Activated naive CD4-positive, alpha-beta T cell treated with anti-CD3 and anti-CD28 coated beads, Interleukin-2, amount 10 ng/mL, durations not matched to agents 7 days and 5 days (primary cell): ENCODE measurements at regions of chr10 and their contacts with region 1.

Region 1: DNA sequence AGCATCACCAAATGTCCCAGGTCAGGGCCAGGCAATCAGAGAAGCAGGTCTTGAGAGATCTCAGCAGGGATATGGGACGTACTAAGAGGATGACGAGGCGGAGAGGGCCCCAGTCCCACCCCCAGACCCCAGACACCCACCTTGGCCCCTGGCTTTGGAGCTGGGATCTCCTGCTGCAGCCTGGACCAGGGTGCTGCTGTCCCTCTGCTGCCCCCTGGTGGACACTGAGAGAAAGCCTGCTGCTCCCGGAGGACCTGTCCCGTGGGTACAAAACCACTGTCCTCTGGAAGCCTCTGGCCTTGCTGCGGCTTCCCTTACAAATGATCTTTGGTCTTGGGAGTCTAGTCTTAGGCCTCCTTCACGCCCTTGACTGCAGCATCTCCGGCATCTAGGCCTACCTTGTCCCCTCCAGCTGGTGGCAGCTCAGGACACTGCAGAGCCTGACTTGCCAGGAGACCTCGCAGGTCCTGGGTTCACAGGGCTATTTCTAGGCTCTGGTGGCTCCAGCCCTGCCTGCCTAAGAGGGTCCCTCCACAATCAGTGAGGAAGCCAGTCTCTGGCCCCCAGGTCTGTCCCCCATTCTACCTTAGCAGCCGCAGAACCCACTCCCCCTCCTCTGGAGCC is 97.1 kb downstream of the RGS10 start:
- DNase-seq: peak; percentile 89
- H3K4me3 Mint-ChIP-seq: no peak overlapping the region
- H3K27ac Mint-ChIP-seq: peak overlapping the region; percentile 43
- H3K4me1 Mint-ChIP-seq: peaks cover 14% of the 10 kb centered on the region
- H3K27me3 Mint-ChIP-seq: no peaks in the 10 kb centered on the region

Region 2: GRCh38 chr10:119416855-119417254 is 28.6 kb before region 1 on chr10:
- CTCF ChIA-PET with region 1: interaction called, 13 read pairs
- DNase-seq: peak; percentile 82
- H3K4me3 Mint-ChIP-seq: no peak overlapping the region
- H3K27ac Mint-ChIP-seq: no peak overlapping the region
- H3K4me1 Mint-ChIP-seq: no peaks in the 10 kb centered on the region
- H3K27me3 Mint-ChIP-seq: no peaks in the 10 kb centered on the region

Region 3: GRCh38 chr10:119457966-119458766 is 12.7 kb after region 1 on chr10:
- CTCF ChIA-PET with region 1: interaction called, 12 read pairs
- DNase-seq: no peak
- H3K4me3 Mint-ChIP-seq: no peak overlapping the region
- H3K27ac Mint-ChIP-seq: no peak overlapping the region
- H3K4me1 Mint-ChIP-seq: peaks cover 2% of the 10 kb centered on the region
- H3K27me3 Mint-ChIP-seq: peaks cover under 1% of the 10 kb centered on the region

Region 4: GRCh38 chr10:119489991-119490326 is 44.5 kb after region 1 on chr10:
- CTCF ChIA-PET with region 1: interaction called, 17 read pairs
- DNase-seq: no peak
- H3K4me3 Mint-ChIP-seq: peak overlapping the region; percentile 74
- H3K27ac Mint-ChIP-seq: peak overlapping the region; percentile 89
- H3K4me1 Mint-ChIP-seq: peaks cover 59% of the 10 kb centered on the region
- H3K27me3 Mint-ChIP-seq: no peaks in the 10 kb centered on the region

Region 5: DNA sequence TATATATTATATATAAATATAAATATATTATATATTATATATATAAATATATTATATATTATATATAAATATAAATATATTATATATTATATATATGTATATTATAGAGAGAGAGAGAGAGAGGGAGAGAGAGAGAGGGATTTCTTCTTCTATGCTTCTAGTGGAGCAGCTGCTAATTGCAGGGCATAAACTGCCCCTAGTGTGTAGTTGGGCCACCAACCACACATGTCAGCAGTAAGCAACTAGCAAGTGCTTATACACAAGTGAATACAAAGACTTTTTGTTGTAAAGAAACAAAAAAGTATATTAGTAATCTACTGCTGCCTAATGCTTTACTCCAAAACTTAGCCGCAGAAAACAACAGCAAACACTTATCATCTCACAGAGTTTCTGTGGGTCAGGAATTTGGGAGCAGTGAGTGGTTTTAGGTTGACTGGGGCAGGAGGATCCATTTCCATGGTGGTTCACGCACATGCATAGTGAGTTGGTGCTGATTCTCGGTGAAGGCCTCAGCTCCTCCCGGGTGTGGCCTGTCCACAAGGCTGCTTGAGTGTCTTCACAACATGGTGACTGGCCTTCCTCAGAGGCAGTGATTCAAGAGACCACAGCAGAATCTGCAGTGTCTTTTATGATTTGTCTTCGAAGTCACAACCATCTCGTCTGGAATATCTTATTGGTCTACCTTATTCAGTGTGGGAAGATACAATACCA is 180.3 kb after region 1 on chr10:
- CTCF ChIA-PET with region 1: no interaction called
- DNase-seq: no peak
- H3K4me3 Mint-ChIP-seq: no peak overlapping the region
- H3K27ac Mint-ChIP-seq: no peak overlapping the region
- H3K4me1 Mint-ChIP-seq: peaks cover 4% of the 10 kb centered on the region
- H3K27me3 Mint-ChIP-seq: peaks cover 23% of the 10 kb centered on the region